Left ventricle myocardium superior (tissue), 1 donor: ENCODE measurements at regions of chr1 and their contacts with region 1.

Region 1: DNA sequence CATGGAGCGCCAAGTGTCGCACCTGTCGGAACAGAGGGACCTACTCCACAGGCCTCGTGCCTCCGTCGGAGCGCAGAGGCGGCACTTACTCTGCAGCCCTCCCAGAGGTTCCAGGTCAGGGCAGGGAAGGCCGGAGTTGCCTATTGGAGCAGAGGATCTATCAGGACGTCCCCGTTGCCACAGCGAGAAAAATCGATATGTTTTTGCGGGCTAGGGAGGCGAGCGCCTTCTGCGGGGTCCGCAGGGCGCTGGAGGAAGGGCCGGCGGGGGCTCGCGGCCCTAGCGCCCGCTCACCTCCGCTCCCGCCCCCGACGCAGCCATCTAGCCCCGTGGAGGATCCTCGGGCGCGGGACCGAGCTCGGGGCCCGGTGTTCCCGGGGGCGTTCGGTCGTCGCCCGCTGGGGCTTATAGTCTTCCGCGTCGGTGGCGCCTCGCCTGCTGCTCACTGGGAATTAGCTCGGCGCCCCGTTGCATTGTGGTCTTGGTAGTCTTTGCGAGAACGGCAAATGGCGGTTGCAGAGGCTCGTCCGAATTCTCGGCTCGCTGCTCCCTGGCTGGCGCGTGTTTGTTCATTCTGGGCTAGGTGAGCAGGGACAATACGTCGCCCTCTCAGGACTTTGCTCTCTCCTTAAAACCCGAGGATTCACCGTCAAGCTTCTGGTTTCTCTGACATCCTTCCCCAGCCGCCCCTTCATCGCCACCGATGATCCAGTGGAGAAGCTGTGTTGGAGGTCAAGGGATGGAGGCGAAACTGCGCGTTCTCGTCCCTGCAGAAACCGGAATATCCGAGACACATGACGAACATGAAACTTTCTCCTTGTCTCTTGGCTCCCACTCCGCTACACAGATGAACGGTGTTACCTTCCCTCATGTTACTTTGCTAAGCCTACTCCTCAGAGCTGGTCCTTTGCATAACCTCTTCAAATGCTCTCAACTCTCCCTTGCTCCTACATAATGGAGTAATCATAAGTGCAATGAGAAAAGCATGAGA is at the start of gene JTB:
- DNase-seq: peak; percentile 92
- ATAC-seq: peak; percentile 96
- total RNA-seq, gene JTB: 80.7 TPM

Region 2: DNA sequence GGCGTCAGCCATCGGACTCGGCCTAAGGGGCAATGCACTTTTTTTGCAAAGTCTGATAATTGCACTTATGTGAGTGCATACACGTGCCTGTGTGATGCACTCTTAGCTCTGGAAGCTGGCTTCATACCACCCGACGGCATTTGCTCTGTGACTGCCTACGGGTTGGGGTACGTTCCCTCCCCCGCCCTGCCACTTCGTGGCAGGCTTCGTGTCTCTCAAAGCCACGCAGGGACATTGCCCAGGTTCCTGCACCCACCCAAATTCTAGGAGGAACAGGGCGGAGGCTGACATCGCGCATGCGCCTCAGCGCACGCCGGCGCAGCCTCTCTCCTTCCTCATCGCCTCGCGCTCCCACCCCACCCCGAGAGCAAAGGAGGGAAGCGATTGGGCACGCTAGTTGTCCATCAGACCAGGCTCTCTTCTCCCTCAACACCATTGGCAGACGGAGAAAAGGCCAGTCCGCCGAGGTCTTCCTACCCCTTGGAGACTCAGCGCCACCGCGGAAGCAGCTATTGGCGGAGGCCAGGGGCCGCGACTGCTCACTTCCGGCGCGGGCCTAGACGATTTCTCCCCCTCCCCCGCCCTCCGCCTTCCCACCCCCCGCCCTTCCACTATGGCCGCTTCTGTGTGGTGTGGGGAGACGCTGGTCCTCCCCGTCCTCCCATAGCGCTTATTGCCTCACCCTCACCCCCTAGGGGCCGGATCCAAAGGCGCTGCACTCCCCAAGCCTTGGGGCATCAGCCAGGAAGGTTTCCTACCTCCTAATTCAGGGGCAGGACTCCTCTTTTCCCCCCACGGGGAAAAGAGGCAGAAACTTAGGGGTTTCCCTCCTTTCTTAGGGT is 249.9 kb before region 1 on chr1 and contains the start of gene INTS3:
- intact Hi-C with region 1: no loop called
- DNase-seq: peak; percentile 99
- ATAC-seq: peak; percentile 100
- total RNA-seq, gene INTS3: 35.5 TPM

Region 3: GRCh38 chr1:153796791-153797659 is 180.5 kb before region 1 on chr1:
- intact Hi-C with region 1: loop called (anchors 10 kb)
- DNase-seq: peak; percentile 76
- ATAC-seq: peak; percentile 75

Region 4: DNA sequence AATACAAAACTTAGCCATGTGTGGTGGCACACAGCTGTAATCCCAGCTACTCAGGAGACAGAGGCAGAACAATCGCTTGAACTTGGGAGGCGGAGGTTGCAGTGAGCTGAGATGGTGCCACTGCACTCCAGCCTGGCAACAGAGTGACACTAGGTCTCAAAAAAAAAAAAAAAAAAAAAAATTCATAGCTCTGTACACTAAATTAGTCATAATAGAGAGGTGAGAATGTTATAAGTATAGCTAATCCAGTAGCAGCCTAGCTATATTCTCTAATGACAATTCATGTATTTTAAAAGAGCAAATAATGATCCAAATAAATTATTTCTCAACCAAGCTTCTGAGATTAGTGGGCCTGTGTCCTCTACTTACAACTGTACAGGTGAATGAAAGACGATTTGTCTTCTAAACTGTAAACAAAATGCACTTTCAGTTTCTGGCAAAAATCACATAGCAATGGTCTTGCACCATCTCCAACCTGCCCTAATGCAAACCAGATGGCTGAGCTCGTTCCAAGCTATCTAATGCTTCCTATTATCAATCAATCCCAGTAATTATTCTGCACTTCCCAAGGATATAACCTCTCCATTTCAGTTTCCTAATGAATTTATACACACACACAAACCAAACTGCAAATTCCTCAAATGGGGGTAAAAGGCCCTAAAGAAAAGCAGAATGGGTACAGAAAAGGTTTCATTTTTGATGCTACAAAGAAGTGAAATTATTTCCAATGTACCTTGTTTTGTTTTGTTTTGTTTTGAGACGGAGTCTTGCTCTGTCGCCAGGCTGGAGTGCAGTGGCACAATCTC is 111.3 kb before region 1 on chr1:
- intact Hi-C with region 1: no loop called
- DNase-seq: no peak
- ATAC-seq: no peak